PC-9 (cell line): ENCODE measurements at regions of chr12 and their contacts with region 1.

Region 1: DNA sequence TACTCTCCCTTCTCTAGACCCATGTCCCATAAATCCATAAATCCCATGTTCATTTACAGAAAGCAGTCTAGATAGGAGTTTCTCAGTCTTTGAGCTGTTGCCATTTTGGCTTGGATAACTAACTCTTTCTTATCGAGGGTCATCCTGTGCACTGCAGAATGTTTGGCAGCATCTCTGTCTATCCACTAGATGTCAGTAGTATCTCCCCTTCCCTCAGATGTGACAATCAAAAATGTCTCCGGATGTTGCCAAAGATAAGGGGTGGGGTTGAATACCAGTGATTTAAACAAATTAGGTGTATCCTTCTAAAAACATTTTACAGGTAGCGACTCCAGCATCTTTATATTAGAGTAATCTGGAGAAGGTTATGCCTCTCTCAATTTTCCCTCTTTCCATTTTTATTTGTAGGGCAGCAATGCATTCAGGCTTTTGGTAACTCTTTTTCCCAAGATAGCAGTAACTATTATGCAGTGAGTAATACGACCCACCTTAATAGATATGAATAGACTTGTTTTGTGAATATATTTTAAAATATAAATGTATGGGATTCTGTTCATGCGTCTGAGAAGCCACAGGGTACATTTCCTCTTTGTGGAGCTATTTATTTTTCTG is 100.7 kb downstream of the LRRK2 start:
- DNase-seq: peak; percentile 4 to 68
- H3K4me3 ChIP-seq: peak overlapping the region; percentile 57; the same call in 1 of the 2 replicates
- H3K27ac ChIP-seq: peak overlapping the region; percentile 33
- H3K4me1 ChIP-seq: peaks cover 5% of the 10 kb centered on the region; the same call in 1 of the 2 replicates
- H3K27me3 ChIP-seq: no peaks in the 10 kb centered on the region
- CTCF ChIP-seq: peak; percentile 71

Region 2: DNA sequence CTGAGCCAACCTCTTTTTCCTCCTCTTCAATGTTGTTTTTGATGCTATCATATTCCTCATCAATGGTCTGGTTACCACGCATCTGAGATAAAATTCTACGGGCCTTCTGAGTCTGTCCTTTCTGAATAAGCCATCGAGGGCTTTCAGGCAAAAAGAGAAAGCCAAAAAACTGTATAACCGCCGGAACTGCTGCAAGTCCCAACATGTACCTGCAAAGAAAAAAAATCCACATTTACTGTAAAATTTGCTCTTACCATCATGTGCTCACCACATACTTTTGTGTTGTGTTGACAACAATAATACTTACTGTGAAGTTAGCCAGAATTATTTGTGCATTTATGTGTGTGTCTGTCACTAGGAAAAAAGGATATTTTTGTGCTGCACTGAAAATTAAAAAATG is 297.2 kb before region 1 on chr12:
- CTCF ChIA-PET with region 1: no interaction called
- POLR2A ChIA-PET with region 1: no interaction called
- intact Hi-C with region 1: no loop called
- DNase-seq: no peak
- H3K4me3 ChIP-seq: no peak overlapping the region
- H3K27ac ChIP-seq: no peak overlapping the region
- H3K4me1 ChIP-seq: no peaks in the 10 kb centered on the region
- H3K27me3 ChIP-seq: no peaks in the 10 kb centered on the region
- CTCF ChIP-seq: no peak

Region 3: DNA sequence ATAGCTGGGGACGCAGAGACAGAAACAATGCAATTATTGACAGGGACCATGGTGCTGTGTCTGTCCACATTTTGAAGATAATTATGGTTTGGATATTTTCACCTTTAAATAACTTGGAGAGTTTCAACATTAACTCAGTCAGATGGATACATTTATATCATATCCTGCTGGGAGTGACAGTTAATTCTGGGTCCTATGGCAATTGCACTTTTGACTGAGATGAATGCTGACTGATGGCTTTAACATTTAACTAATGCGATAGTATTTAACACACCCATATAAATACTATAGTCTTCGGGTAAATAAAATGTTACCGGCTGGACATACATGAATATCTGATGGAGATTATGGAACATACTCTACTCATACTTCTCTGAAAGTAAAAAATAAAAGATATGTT is 17.7 kb after region 1 on chr12:
- CTCF ChIA-PET with region 1: interaction called, 11 read pairs
- POLR2A ChIA-PET with region 1: no interaction called
- intact Hi-C with region 1: no loop called
- DNase-seq: no peak
- H3K4me3 ChIP-seq: no peak overlapping the region
- H3K27ac ChIP-seq: no peak overlapping the region
- H3K4me1 ChIP-seq: no peaks in the 10 kb centered on the region
- H3K27me3 ChIP-seq: no peaks in the 10 kb centered on the region
- CTCF ChIP-seq: no peak

Region 4: DNA sequence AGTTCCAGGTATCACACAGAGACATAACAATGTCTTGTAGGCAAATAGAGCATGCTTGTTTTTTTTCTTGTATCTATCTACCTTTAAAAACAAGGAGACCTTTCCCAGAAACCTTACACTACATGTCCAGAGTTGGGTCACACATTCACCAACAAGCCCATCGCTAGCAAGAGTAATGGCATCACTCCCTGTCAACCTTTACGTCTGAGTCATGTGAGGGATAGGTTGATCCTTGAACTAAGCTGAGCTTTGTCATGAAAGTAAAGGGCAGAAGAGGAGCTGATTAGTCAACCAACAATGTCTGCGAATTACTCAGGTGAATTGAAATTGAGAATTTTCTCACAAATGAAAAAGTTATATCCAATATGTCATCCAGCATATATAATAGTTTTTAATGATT is 586.2 kb after region 1 on chr12:
- CTCF ChIA-PET with region 1: no interaction called
- POLR2A ChIA-PET with region 1: no interaction called
- intact Hi-C with region 1: no loop called
- DNase-seq: no peak
- H3K4me3 ChIP-seq: no peak overlapping the region
- H3K27ac ChIP-seq: no peak overlapping the region
- H3K4me1 ChIP-seq: peaks cover 14% of the 10 kb centered on the region
- H3K27me3 ChIP-seq: no peaks in the 10 kb centered on the region
- CTCF ChIP-seq: no peak